Activated CD4-positive, alpha-beta memory T cell treated with anti-CD3 and anti-CD28 coated beads for 36 hours (primary cell): ENCODE measurements at regions of chr1 and their contacts with region 1.

Region 1: DNA sequence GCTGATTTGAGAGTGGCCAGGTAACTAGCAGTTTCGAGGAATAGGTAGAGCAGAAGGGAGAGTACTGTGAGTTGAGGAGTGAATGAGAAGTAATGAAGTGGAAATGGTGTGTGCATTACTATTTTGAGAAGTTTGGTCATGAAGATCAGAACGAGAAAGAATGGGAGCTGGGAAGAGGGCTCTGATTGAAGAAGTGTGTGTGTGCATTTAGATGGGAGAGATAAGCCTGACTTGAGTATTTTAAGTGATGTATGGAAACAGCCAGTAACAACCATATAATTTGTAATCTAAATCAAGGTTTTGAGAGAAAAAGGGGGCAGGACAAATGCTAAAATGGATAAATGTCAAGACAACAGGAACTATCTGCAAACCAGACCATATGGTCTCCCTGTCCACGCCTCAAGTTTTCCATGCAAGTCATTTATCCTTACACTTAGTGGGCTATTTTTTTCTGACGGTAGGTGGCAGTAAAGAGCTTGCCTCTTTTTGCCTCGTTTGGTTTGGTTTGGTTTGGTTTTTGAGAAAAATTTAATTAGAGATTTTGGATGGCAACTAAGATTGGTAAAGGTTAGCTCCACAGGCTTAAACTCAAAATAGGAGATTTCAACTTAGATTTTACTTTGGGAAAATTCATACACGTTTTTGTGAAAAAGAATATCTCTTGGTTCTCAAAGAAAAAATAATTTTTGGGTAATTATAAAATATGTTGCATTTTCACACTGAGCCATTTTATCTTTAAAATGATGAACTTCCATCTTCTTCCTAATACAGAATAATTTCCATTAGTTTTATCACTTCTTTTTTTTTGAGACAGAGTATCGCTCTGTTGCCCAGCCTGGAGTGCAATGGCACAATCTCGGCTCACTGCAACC is 9.5 kb upstream of the B3GALNT2 start:
- DNase-seq: peak; percentile 24
- H3K4me3 Mint-ChIP-seq: no peak overlapping the region
- H3K27ac Mint-ChIP-seq: no peak overlapping the region
- H3K4me1 Mint-ChIP-seq: no peaks in the 10 kb centered on the region
- H3K27me3 Mint-ChIP-seq: peaks cover 5% of the 10 kb centered on the region

Region 2: DNA sequence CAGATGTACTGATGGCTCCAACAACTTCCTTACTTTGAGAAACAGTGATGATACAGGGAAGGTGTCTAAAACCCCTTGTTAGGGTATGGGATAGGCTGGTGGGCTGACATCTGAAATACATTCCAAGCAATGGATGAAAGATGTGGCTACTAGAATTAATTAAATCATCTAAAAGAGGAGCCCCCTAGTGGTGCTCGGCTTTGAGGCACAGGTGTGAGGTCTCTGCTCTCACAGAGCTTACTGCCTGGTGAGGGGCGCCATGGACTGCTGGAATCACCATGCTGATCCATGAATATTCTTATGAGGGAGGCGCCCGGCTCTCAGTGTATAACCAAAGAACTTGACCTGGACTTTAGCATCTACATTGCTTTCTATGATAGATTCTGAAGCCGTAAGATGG is 87.4 kb after region 1 on chr1:
- CTCF ChIA-PET with region 1: interaction called, 25 read pairs
- POLR2A ChIA-PET with region 1: no interaction called
- intact Hi-C with region 1: no loop called
- DNase-seq: peak; percentile 30
- H3K4me3 Mint-ChIP-seq: no peak overlapping the region
- H3K27ac Mint-ChIP-seq: no peak overlapping the region
- H3K4me1 Mint-ChIP-seq: no peaks in the 10 kb centered on the region
- H3K27me3 Mint-ChIP-seq: no peaks in the 10 kb centered on the region

Region 3: DNA sequence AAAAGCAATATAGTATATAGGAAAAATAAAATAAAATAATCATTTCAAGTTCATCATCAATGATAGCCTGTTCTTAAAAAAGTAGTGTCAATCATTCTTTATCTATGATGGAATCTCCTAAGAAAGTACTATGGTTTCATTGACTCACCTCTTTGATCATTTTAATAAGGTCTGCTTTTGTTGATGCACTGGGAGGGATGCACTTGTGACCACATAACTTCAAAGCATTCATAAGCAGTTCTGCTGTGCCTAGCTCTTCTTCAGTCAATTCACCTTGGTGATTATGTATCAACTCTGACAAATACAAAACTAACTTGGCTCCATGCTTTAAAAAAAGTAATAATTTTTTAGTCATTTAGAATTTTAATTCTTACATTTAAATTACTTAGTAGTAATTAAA is 220.6 kb after region 1 on chr1:
- CTCF ChIA-PET with region 1: interaction called, 3 read pairs
- POLR2A ChIA-PET with region 1: no interaction called
- intact Hi-C with region 1: loop called (anchors 1 kb)
- DNase-seq: no peak
- H3K4me3 Mint-ChIP-seq: no peak overlapping the region
- H3K27ac Mint-ChIP-seq: no peak overlapping the region
- H3K4me1 Mint-ChIP-seq: peaks cover 5% of the 10 kb centered on the region
- H3K27me3 Mint-ChIP-seq: no peaks in the 10 kb centered on the region

Region 4: DNA sequence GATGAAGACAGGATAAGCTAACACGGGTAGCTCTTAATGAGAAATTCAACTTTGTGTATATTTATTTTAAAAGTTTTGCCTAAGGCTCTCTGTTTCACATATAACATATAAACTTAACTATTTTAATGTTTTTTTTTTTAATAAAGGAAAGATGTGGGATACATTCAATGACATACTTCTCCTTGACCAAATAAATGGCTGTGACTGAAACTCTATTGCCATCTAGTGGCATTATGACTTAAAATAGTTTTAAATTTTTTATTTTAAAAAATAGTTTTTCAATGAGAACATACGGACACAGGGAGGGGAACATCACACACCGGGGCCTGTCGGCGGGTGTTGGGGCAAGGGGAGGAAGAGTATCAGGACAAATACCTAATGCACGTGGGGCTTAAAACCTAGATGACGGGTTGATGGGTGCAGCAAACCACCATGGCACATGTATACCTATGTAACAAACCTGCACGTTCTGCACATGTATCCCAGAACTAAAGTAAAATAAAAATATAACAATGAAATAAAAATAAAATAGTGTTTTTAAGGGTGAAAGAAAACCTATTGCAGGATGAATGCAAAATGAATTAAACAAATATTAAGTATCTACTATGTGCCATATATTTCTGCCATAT is 269.5 kb after region 1 on chr1:
- CTCF ChIA-PET with region 1: interaction called, 37 read pairs
- POLR2A ChIA-PET with region 1: no interaction called
- intact Hi-C with region 1: loop called (anchors 1 kb)
- DNase-seq: no peak
- H3K4me3 Mint-ChIP-seq: no peak overlapping the region
- H3K27ac Mint-ChIP-seq: no peak overlapping the region
- H3K4me1 Mint-ChIP-seq: no peaks in the 10 kb centered on the region
- H3K27me3 Mint-ChIP-seq: no peaks in the 10 kb centered on the region